CD8-positive, alpha-beta T cell (primary cell): ENCODE measurements at regions of chr15 and their contacts with region 1.

Region 1: GRCh38 chr15:84588053-84588874 is 12.5 kb upstream of the ZSCAN2 start:
- DNase-seq: peak; percentile 67 to 90 (median 84)
- ATAC-seq: peak; percentile 100
- H3K4me3 ChIP-seq: no peak overlapping the region
- H3K4me3 Mint-ChIP-seq: peak overlapping the region; percentile 72
- H3K27ac ChIP-seq: no peak overlapping the region
- H3K27ac Mint-ChIP-seq: no peak overlapping the region
- H3K4me1 ChIP-seq: peaks cover 5% of the 10 kb centered on the region
- H3K4me1 Mint-ChIP-seq: peaks cover 3% of the 10 kb centered on the region
- H3K27me3 ChIP-seq: no peaks in the 10 kb centered on the region
- H3K27me3 Mint-ChIP-seq: no peaks in the 10 kb centered on the region
- CTCF ChIP-seq: peak; percentile 76

Region 2: DNA sequence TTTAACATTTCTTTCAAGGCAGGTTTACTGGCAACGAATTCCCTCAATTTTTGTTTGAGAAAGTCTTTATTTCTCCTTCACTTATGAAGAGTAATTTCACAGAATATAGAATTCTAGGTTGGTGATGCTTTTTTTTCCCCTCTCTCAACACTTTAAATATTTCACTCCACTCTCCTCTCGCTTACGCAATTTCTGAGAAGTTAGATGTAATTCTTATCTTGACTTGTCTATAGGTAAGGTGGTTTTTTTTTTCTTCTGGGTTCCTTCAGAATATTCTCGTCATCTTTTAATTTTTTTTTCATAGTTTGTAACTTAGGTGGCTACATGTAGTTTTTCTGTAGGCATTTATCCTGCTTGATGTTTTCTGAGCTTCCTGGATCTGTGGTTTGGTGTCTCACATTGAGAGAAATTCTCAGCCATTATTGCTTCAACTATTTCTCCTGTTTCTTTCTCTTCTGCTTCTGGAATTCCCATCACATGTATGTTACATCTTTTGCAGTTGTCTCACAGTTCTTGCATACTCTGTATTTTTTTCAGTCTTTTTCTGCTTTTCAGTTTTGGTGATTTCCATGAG is 542.1 kb before region 1 on chr15:
- CTCF ChIA-PET with region 1: no interaction called
- POLR2A ChIA-PET with region 1: no interaction called
- intact Hi-C with region 1: no loop called
- DNase-seq: no peak
- ATAC-seq: no peak
- H3K4me3 ChIP-seq: no peak overlapping the region
- H3K4me3 Mint-ChIP-seq: no peak overlapping the region
- H3K27ac ChIP-seq: no peak overlapping the region
- H3K27ac Mint-ChIP-seq: no peak overlapping the region
- H3K4me1 ChIP-seq: no peaks in the 10 kb centered on the region
- H3K4me1 Mint-ChIP-seq: no peaks in the 10 kb centered on the region
- H3K27me3 ChIP-seq: no peaks in the 10 kb centered on the region
- H3K27me3 Mint-ChIP-seq: peaks cover 15% of the 10 kb centered on the region
- CTCF ChIP-seq: no peak

Region 3: GRCh38 chr15:84575493-84575892 is 12.8 kb before region 1 on chr15:
- CTCF ChIA-PET with region 1: interaction called, 22 read pairs
- POLR2A ChIA-PET with region 1: no interaction called
- intact Hi-C with region 1: no loop called
- DNase-seq: no peak
- ATAC-seq: no peak
- H3K4me3 ChIP-seq: no peak overlapping the region
- H3K4me3 Mint-ChIP-seq: no peak overlapping the region
- H3K27ac ChIP-seq: no peak overlapping the region
- H3K27ac Mint-ChIP-seq: no peak overlapping the region
- H3K4me1 ChIP-seq: no peaks in the 10 kb centered on the region
- H3K4me1 Mint-ChIP-seq: peaks cover 2% of the 10 kb centered on the region
- H3K27me3 ChIP-seq: no peaks in the 10 kb centered on the region
- H3K27me3 Mint-ChIP-seq: no peaks in the 10 kb centered on the region
- CTCF ChIP-seq: no peak

Region 4: DNA sequence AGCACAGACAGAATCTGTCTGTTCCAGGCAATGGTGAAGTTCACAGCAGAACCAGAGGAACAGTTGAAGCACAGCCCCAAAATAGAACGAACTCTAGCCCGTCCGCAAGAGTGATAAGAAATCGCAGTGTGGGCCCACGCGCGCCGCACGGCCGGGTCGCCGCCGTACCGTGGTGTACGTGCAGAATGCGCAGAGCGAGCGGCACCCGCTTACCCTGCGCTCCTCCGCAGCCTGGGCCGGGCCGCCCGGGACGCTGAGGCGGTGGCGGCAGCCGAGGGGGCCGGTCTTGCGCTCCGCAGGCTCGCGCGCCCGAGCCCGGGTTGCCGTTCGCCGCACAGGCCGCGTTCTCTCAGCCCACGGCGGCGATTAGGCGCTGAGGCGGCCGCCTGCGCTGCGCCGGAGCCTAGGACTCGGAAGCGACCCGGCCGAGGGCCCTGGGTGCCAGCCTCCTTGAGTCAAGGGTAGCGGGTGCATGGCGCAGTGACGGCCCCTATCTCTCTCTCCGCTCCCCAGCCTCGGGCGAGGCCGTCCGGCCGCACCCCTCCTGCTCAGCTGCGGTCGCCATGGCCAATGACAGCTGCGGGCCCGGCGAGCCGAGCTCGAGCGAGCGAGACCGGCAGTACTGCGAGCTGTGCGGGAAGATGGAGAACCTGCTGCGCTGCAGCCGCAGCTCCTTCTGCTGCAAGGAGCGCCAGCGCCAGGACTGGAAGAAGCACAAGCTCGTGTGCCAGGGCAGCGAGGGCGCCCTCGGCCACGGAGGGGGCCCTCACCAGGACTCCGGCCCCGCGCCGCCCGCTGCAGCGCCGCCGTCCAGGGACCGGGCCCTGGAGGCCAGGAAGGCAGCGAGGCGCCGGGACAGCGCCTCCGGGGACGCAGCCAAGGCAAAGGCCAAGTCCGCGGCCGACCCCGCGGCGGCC is 45.3 kb after region 1 on chr15:
- CTCF ChIA-PET with region 1: interaction called, 19 read pairs
- POLR2A ChIA-PET with region 1: interaction called, 3 read pairs
- intact Hi-C with region 1: no loop called
- DNase-seq: peak; percentile 29 to 84 (median 63)
- ATAC-seq: peak; percentile 41
- H3K4me3 ChIP-seq: peak overlapping the region; percentile 63 to 77
- H3K4me3 Mint-ChIP-seq: peak overlapping the region; percentile 93
- H3K27ac ChIP-seq: peak overlapping the region; percentile 51 to 74
- H3K27ac Mint-ChIP-seq: peak overlapping the region; percentile 96
- H3K4me1 ChIP-seq: peaks cover 33% of the 10 kb centered on the region
- H3K4me1 Mint-ChIP-seq: peaks cover 50% of the 10 kb centered on the region
- H3K27me3 ChIP-seq: no peaks in the 10 kb centered on the region
- H3K27me3 Mint-ChIP-seq: no peaks in the 10 kb centered on the region
- CTCF ChIP-seq: no peak

Region 5: DNA sequence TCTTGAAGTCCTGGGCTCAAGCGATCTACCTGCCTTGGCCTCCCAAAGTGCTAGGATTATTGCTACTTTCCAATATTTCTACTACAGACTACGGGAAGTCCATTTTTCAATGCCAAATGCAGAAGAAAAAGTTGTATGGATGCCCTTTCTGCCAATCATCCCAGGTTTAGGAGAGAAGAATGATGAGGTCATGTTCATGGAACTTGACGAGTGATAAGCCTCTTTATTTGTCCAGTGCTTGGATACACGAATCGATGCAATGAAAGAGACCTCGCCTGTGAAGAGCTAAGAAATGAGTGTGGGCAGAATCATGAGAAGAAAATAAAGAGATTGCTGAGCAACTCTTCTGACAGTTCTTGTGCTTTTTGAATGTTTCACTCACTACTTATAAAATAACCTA is 295.2 kb after region 1 on chr15:
- CTCF ChIA-PET with region 1: interaction called, 30 read pairs
- POLR2A ChIA-PET with region 1: no interaction called
- intact Hi-C with region 1: loop called (anchors 1 kb)
- DNase-seq: no peak
- ATAC-seq: no peak
- H3K4me3 ChIP-seq: no peak overlapping the region
- H3K4me3 Mint-ChIP-seq: no peak overlapping the region
- H3K27ac ChIP-seq: no peak overlapping the region
- H3K27ac Mint-ChIP-seq: no peak overlapping the region
- H3K4me1 ChIP-seq: no peaks in the 10 kb centered on the region
- H3K4me1 Mint-ChIP-seq: no peaks in the 10 kb centered on the region
- H3K27me3 ChIP-seq: no peaks in the 10 kb centered on the region
- H3K27me3 Mint-ChIP-seq: no peaks in the 10 kb centered on the region
- CTCF ChIP-seq: no peak

Region 6: GRCh38 chr15:85044251-85044853 is 456.1 kb after region 1 on chr15:
- CTCF ChIA-PET with region 1: interaction called, 3 read pairs
- POLR2A ChIA-PET with region 1: interaction called, 3 read pairs
- intact Hi-C with region 1: loop called (anchors 1 to 2 kb)
- DNase-seq: peak in 8 of 9 experiments; percentile 17 to 70 (median 54)
- ATAC-seq: peak; percentile 58
- H3K4me3 ChIP-seq: no peak overlapping the region
- H3K4me3 Mint-ChIP-seq: no peak overlapping the region
- H3K27ac ChIP-seq: no peak overlapping the region
- H3K27ac Mint-ChIP-seq: no peak overlapping the region
- H3K4me1 ChIP-seq: peaks cover 18% of the 10 kb centered on the region
- H3K4me1 Mint-ChIP-seq: peaks cover 26% of the 10 kb centered on the region
- H3K27me3 ChIP-seq: no peaks in the 10 kb centered on the region
- H3K27me3 Mint-ChIP-seq: no peaks in the 10 kb centered on the region
- CTCF ChIP-seq: peak; percentile 60